HEK293 (cell line): ENCODE measurements at regions of chr7 and their contacts with region 1.

Region 1: GRCh38 chr7:92447345-92448204 is at the start of gene GATAD1:
- H3K4me3 ChIP-seq: peak within 1 kb of the TSS; percentile 89
- H3K27ac ChIP-seq: peak within 1 kb of the TSS; percentile 93
- H3K4me1 ChIP-seq: no peaks in the 10 kb centered on the region
- CTCF ChIP-seq: peak; percentile 79

Region 2: DNA sequence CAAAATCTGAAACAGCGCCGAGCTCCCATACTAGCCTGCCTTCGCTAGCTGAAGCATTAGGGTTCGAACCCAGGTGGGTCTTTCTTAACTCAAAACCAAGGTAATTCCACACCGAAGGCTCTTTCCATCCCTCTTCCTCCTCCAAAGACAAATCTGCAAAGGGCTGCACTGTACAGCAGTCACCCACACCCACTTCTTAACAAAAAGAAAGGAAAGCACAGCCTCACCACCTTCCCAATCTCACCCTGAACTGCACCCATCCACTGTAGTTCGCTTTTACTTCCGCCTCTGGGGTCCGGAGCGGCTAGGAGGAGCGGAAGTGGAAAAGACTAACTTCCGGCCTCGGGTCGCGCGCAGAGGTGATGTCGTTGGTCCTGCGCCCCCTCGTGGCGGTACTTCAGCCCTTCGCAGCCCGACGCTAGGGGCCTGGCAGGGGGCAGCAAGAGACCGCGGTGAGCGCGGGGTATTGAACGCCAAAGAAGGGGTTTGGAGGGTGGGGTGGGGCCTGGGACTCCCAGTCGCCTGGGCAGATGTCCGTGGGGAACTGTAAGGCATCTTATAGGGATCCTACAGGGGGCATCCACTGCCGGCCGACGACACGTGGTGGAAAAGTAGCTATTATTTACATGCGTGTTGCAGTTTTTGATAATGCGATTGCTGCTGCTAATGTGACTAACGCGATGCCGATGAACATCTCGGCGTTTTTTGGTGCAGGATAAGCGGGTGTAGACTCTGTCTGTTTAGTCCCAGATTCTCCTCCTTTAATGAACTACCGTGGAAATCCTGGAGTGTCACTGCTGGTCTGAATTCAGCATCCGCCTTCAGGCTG is 566.9 kb before region 1 on chr7 and contains the start of gene MTERF1:
- CTCF ChIA-PET with region 1: interaction called, 8 read pairs
- POLR2A ChIA-PET with region 1: interaction called, 12 read pairs
- H3K4me3 ChIP-seq: peak within 1 kb of the TSS; percentile 72
- H3K27ac ChIP-seq: peak within 1 kb of the TSS; percentile 1; the same call in 1 of the 2 replicates
- H3K4me1 ChIP-seq: peaks cover 14% of the 10 kb centered on the region
- CTCF ChIP-seq: peak; percentile 99

Region 3: GRCh38 chr7:92245487-92246362 is 201.8 kb before region 1 on chr7 and contains the starts of genes ANKIB1 and KRIT1:
- CTCF ChIA-PET with region 1: interaction called, 9 read pairs
- POLR2A ChIA-PET with region 1: interaction called, 22 read pairs
- H3K4me3 ChIP-seq: peak within 1 kb of the TSS; percentile 93
- H3K27ac ChIP-seq: peak within 1 kb of the TSS; percentile 81
- H3K4me1 ChIP-seq: peaks cover 4% of the 10 kb centered on the region; the same call in 1 of the 2 replicates
- CTCF ChIP-seq: peak; percentile 67

Region 4: DNA sequence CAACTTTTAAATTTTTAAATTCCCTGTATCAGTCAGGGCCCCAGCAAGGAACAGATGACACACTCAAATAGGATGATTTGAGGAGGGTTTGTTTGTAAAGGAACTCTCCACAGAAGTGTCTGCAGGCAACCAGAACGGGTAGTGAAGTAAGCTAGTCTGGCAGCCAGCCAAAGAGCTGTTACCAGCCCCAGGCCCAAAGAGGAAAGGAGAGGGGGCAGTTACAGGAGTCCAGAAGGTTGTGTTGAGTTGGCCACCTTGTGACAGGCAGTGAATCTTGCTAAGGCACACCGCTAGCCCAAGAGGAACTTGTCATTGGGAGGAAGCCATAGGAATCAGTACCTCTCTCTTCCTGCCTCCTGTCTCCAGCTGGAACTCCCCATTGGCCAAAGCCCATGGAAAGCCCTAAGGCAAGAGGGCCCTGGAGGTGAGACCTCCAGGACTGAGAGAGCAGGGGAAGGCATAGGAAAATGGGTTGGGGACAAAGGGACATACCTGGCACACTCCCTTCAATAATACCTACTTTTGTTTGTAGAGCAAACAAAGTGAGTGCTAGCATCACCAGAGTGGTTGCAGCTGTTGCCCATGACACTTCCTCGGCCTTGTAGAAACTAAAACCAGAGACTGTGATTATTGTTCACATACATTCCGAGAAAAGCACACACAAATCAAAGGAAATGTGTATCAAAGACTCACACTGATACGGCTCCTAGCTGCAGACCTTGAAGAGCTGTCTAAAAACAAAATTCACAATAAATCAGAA is 25.7 kb before region 1 on chr7:
- CTCF ChIA-PET with region 1: interaction called, 34 read pairs
- POLR2A ChIA-PET with region 1: interaction called, 7 read pairs
- H3K4me3 ChIP-seq: no peak overlapping the region
- H3K27ac ChIP-seq: no peak overlapping the region
- H3K4me1 ChIP-seq: no peaks in the 10 kb centered on the region
- CTCF ChIP-seq: no peak

Region 5: GRCh38 chr7:92461027-92462003 is 13.7 kb after region 1 on chr7:
- CTCF ChIA-PET with region 1: interaction called, 29 read pairs
- POLR2A ChIA-PET with region 1: interaction called, 5 read pairs
- H3K4me3 ChIP-seq: no peak overlapping the region
- H3K27ac ChIP-seq: no peak overlapping the region
- H3K4me1 ChIP-seq: no peaks in the 10 kb centered on the region
- CTCF ChIP-seq: peak; percentile 36; the same call in 1 of the 2 replicates

Region 6: DNA sequence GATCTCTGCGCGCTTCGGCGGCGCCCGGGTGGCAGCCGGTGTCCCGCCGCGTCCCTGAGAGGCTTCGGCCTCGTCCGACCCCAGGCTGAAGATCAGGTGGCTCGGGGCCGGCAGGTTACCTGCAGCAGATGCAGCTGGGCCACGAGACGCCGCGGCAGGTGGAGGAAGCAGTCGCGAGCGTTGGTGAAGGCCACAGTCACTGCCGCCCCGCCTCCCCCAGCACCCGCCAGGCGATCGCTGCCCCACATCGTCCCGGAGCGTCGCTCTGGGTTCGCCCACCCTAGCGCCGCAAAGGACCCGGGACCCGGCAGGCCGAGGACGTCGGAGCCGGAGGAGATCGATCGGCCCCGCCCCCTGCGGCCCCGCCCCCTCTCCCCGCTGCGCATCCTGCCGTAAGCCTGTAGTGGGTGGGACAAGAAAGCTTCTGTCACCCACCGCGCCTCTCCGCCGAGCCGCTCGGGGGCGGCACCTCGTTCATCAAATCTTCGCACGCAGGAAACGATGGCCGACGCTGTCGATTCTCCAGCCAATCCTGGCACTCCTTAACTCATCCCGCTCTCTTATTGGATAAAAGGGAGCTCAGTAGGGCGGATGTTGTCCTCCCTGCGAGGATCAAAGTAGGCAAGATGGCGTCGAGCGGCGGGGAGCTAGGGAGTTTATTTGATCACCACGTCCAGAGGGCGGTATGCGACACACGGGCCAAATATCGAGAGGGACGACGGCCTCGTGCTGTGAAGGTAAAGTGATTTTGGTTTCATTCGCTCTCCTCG is 80.8 kb after region 1 on chr7 and contains the starts of genes PEX1 and RBM48:
- CTCF ChIA-PET with region 1: interaction called, 3 read pairs
- POLR2A ChIA-PET with region 1: interaction called, 11 read pairs
- H3K4me3 ChIP-seq: peak within 1 kb of the TSS; percentile 72
- H3K27ac ChIP-seq: peak within 1 kb of the TSS; percentile 82
- H3K4me1 ChIP-seq: peaks cover 7% of the 10 kb centered on the region; the same call in 1 of the 2 replicates
- CTCF ChIP-seq: peak; percentile 85